CD8-positive, alpha-beta T cell (primary cell): ENCODE measurements at regions of chr3 and their contacts with region 1.

Region 1: DNA sequence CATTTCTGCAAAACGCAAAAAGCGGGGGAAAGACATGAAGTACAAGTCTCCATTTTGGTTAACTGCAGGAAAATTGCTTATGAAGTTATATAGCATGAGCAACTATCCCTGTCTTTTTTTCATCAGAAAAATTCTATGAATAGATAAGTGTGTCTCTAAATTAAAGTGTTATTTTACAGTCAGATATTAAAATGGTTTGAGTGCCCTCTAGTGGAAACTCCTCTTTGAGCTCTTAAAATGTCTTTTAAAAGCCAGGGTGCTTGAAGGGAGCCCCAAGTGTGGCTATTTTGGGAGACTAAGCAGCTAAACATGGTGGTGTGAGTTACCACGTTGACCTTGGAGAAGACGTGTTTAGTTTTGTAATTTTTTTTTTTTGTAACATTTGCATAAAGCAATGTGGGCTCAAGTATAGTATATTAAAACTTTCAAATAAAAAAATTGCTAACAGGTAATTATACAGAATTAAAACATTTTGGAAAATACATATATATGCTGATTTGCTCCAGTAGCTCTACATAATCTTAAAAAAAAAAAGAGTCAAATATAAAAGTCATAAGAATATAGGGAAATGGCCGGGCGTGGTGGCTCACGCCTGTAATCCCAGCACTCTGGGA is 77.2 kb downstream of the PPP2R3A start:
- DNase-seq: peak in 2 of 9 experiments; percentile 22 to 33
- ATAC-seq: no peak
- H3K4me3 ChIP-seq: no peak overlapping the region
- H3K4me3 Mint-ChIP-seq: no peak overlapping the region
- H3K27ac ChIP-seq: no peak overlapping the region
- H3K27ac Mint-ChIP-seq: no peak overlapping the region
- H3K4me1 ChIP-seq: no peaks in the 10 kb centered on the region
- H3K4me1 Mint-ChIP-seq: no peaks in the 10 kb centered on the region
- H3K27me3 ChIP-seq: peaks cover 0 to 4% of the 10 kb centered on the region in 2 experiments
- H3K27me3 Mint-ChIP-seq: peaks cover 25% of the 10 kb centered on the region
- CTCF ChIP-seq: peak; percentile 13

Region 2: GRCh38 chr3:134794950-134795745 is 1247.6 kb before region 1 on chr3 and contains the start of gene EPHB1:
- CTCF ChIA-PET with region 1: no interaction called
- POLR2A ChIA-PET with region 1: no interaction called
- intact Hi-C with region 1: loop called in 1 of 2 experiments (anchors 5 kb)
- DNase-seq: peak; percentile 4 to 55 (median 35)
- ATAC-seq: peak; percentile 52
- H3K4me3 ChIP-seq: peak within 1 kb of the TSS; percentile 29 to 30
- H3K4me3 Mint-ChIP-seq: peak within 1 kb of the TSS; percentile 77
- H3K27ac ChIP-seq: no peak within 1 kb of the TSS
- H3K27ac Mint-ChIP-seq: no peak within 1 kb of the TSS
- H3K4me1 ChIP-seq: no peaks in the 10 kb centered on the region
- H3K4me1 Mint-ChIP-seq: peaks cover 7% of the 10 kb centered on the region
- H3K27me3 ChIP-seq: peaks cover 3 to 9% of the 10 kb centered on the region in 2 experiments
- H3K27me3 Mint-ChIP-seq: peaks cover 57% of the 10 kb centered on the region
- CTCF ChIP-seq: peak; percentile 43
- total RNA-seq, gene EPHB1: not detected